GM13976 (cell line): ENCODE measurements at regions of chr11 and their contacts with region 1.

Region 1: DNA sequence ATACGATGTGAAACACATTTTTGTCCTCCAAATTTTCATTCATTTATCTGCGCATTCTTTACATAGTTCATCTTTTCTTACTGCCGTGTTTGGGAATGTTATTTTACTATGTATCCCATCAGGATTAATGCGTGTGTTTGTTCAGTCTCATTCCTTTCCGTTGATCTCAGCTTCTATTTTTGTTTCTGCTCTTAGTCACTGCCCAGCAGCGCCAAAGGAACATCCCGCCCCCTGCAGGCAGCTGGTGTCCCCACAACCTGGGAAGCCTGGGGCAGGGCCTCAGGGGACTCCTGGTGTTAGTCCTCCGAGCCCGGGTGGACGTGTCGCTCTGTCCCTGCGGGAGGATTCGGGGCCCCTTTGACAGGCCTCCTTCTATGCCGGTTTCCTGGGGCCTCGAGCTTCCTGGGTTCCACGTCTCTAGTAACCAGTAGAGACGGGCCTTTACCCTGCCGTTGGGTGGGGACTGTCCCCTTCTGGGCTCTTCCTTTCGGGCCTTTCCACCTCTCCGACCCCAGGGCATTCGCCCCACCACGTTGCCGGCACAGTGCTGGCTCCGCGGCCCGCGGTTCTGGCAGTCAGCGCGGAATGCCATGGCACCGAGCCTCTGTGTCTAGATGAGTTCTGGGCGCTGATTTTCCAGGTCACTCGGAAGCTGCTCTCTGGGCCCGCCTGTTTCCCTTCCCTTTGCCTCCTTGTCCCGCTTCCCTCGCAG is 39.8 kb downstream of the WEE1 start:
- DNase-seq: peak; percentile 88
- CTCF ChIP-seq: peak; percentile 93

Region 2: GRCh38 chr11:9753021-9753420 is 139.7 kb after region 1 on chr11:
- in situ Hi-C with region 1: loop called (anchors 5 kb)
- DNase-seq: no peak
- CTCF ChIP-seq: no peak